Dorsolateral prefrontal cortex (tissue), 120 donors: ENCODE measurements at regions of chr2 and their contacts with region 1.

Region 1: DNA sequence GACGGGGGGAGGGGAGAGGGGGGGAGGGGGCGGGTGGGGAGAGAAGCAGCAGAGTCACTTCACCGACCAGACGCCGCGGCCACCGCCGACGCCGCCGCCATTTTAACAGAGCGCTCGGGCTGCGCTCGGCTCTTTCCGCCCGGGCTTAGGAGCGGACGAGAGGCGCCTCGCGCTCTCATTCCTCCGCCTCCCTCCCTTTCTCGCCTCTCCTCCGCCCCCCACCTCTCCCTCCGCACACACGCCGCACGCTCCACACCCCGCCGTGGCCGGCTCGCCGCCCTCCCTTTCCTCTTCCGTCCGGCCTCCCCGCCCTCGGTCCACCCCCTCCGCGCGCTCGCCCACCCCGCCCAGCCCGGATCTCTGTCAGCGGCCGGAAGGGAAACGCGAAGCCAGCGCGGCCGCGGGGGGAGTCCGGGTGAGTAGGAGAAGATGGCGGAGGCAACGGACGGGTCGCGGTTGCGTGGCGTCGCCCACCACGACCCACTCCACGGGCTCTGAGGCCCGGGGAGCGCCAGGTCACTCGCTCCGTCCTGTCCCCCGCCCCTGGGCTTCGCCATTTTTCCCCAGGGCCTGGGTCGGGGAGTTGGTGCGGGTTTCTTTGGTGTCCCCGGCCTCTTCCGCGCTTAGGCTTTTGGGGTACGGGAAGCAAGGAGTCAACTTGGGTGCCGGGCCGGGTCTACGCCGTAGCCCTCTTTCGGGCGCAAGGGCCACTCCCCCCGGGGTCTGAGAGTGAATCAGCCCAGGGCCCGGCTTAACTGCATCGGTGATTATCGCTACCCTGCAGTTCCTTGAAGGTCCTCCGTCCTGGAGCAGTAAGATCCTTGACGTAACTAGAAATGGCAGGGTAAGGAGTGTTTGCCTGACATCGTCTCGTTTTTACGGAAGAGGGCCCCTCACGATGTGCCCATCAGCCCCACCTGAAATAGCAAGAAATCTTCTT is at the start of gene USP34:
- DNase-seq: peak; percentile 83 to 96 (median 91)
- H3K4me3 ChIP-seq: peak within 1 kb of the TSS; percentile 58 to 99 (median 93)
- H3K27ac ChIP-seq: peak within 1 kb of the TSS; percentile 90 to 100 (median 98)
- H3K27me3 ChIP-seq: no peaks in the 10 kb centered on the region
- CTCF ChIP-seq: peak in 10 of 56 donors; percentile 7 to 24 (median 16)
- total RNA-seq, gene USP34: 122 to 224 (median 167) TPM

Region 2: DNA sequence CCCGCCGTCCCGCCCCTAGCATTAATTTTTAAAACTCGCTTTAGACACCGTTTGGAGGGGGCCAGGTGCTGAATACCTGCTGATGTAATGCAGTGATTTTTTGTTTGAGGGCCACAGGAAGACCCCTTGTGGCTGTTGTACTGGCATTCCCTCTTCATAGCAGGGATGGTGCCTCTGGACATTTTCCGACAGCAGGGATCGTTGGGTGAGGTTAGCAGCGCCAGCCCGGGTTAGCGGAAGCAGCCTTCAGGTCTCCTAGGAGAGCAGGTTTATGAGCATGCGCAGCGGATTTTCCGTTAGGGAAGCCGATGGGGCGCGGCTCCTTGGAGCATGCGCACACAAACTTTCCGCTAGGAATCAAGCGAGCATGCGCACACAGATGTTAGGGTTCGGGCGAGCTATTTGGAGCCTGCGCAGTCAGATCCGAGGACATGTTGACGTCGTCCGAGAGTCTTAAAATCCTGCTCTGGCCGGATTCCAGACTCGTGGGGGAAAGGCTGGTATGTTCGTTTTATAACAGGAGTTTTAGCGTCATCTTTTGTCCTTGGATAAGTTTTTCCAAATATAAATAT is 326.5 kb before region 1 on chr2:
- intact Hi-C with region 1: loop called in 1 of 2 experiments (anchors 10 kb)
- DNase-seq: peak; percentile 79 to 93 (median 88)
- H3K4me3 ChIP-seq: peak overlapping the region; percentile 51 to 96 (median 69)
- H3K27ac ChIP-seq: peak overlapping the region in 58 of 59 donors; percentile 31 to 96 (median 87)
- H3K27me3 ChIP-seq: no peaks in the 10 kb centered on the region
- CTCF ChIP-seq: peak in 29 of 56 donors; percentile 3 to 50 (median 26)

Region 3: DNA sequence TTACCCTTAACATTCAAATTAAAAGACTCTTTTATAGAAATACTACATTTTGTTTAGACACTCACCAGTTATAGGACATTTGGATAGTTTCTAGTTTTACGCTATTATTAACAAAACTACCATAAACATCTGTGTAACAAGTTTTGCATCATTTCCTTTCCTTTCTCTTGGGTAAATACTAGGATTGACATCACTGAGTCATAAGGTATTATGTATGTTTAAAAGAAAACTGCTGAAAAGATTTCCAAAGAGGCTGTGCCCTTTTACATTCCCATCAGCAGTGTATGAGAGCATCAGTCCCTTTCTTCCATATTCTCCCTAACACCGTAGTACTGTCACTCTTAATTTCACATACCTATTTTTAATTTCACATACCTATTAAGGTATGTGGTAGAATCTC is 131.0 kb before region 1 on chr2:
- intact Hi-C with region 1: no loop called
- DNase-seq: no peak
- H3K4me3 ChIP-seq: no peak overlapping the region
- H3K27ac ChIP-seq: no peak overlapping the region
- H3K27me3 ChIP-seq: no peaks in the 10 kb centered on the region
- CTCF ChIP-seq: no peak

Region 4: GRCh38 chr2:61354543-61355197 is 116.6 kb before region 1 on chr2:
- intact Hi-C with region 1: no loop called
- DNase-seq: no peak
- H3K4me3 ChIP-seq: no peak overlapping the region
- H3K27ac ChIP-seq: no peak overlapping the region
- H3K27me3 ChIP-seq: no peaks in the 10 kb centered on the region
- CTCF ChIP-seq: no peak

Region 5: GRCh38 chr2:61538200-61538919 is 67.1 kb after region 1 on chr2 and contains the start of gene XPO1:
- intact Hi-C with region 1: loop called (anchors 1 kb)
- DNase-seq: peak; percentile 99 to 100 (median 99)
- H3K4me3 ChIP-seq: peak within 1 kb of the TSS; percentile 54 to 96 (median 79)
- H3K27ac ChIP-seq: peak within 1 kb of the TSS; percentile 92 to 99 (median 98)
- H3K27me3 ChIP-seq: no peaks in the 10 kb centered on the region
- CTCF ChIP-seq: peak in 5 of 56 donors; percentile 3 to 27 (median 5)
- total RNA-seq, gene XPO1: 103 to 387 (median 148) TPM

Region 6: GRCh38 chr2:61660511-61661388 is 189.5 kb after region 1 on chr2:
- intact Hi-C with region 1: loop called in 1 of 2 experiments (anchors 10 kb)
- DNase-seq: peak in 3 of 10 donors; percentile 35 to 45 (median 42)
- H3K4me3 ChIP-seq: no peak overlapping the region
- H3K27ac ChIP-seq: peak overlapping the region in 26 of 59 donors; percentile 11 to 71 (median 38)
- H3K27me3 ChIP-seq: no peaks in the 10 kb centered on the region
- CTCF ChIP-seq: peak in 1 of 56 donors; percentile 19

Region 7: DNA sequence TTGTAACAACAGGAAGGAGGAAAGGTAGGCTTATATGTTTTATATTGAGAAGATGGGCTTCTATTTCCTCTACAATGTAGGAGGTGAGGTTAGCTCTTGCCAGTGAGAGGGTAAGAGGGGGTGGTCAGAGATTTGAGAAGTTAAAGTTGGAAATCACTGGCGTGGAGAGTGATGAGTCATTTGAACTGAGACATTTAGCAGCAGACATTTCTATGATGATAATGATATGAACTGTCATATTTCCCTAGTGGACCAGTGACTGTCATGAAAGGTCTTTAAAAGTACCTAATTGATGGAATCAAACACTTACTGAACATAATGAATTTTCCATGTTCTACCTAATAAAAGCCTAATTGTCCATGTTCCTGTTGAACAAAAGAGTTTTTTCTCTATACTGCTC is 256.5 kb after region 1 on chr2:
- intact Hi-C with region 1: no loop called
- DNase-seq: no peak
- H3K4me3 ChIP-seq: no peak overlapping the region
- H3K27ac ChIP-seq: peak overlapping the region in 11 of 59 donors; percentile 1 to 40 (median 16)
- H3K27me3 ChIP-seq: no peaks in the 10 kb centered on the region
- CTCF ChIP-seq: no peak

Region 8: GRCh38 chr2:61764035-61764800 is 293.0 kb after region 1 on chr2:
- intact Hi-C with region 1: loop called (anchors 5 to 10 kb)
- DNase-seq: peak; percentile 96 to 99 (median 98)
- H3K4me3 ChIP-seq: peak overlapping the region; percentile 55 to 95 (median 77)
- H3K27ac ChIP-seq: peak overlapping the region; percentile 90 to 100 (median 98)
- H3K27me3 ChIP-seq: no peaks in the 10 kb centered on the region
- CTCF ChIP-seq: peak in 18 of 56 donors; percentile 2 to 38 (median 22)

Region 9: DNA sequence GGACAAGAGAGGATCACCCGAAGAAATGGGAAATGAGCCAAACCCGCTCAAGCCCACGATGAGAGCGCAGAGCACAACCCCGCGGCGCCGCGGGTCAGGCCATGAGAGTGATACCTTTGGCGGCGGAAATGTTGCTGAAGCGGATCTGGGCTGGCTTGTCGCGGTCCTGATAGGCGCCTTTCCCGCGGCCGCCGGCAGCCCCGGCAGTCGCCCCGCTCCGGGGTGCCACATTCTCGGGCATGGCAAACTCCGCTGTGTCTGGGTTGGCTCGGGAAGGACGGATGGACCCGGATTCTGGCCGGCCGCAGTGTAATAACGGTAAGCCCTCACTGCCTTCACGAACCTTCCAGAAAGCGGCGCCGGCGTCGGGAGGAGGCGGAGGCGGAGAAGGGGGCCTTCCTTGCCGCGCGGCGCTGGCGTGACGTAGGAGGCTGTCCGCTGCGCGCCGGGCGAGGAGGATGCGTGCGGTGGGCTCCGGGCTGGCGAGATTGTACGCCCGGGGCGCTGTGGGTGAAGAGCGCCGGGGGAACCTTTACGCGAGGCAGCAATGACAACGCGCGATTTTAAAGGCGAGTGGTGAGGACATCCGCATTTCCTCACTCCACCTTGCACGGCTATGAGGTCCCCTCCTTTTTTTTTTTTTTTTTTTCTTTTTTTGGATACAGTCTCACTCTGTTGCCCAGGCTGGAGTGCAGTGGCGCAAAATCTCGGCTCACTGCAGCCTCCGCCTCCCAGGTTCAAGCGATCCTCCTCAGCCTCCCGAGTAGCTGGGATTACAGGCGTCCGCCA is 417.2 kb after region 1 on chr2 and contains the start of gene CCT4:
- intact Hi-C with region 1: loop called in 1 of 2 experiments (anchors 10 kb)
- DNase-seq: peak; percentile 79 to 91 (median 86)
- H3K4me3 ChIP-seq: peak within 1 kb of the TSS; percentile 65 to 98 (median 89)
- H3K27ac ChIP-seq: peak within 1 kb of the TSS; percentile 92 to 100 (median 99)
- H3K27me3 ChIP-seq: no peaks in the 10 kb centered on the region
- CTCF ChIP-seq: peak in 22 of 56 donors; percentile 5 to 46 (median 18)
- total RNA-seq, gene CCT4: 56.8 to 160 (median 105) TPM